MCF 10A (cell line): ENCODE measurements at regions of chr7 and their contacts with region 1.

Region 1: DNA sequence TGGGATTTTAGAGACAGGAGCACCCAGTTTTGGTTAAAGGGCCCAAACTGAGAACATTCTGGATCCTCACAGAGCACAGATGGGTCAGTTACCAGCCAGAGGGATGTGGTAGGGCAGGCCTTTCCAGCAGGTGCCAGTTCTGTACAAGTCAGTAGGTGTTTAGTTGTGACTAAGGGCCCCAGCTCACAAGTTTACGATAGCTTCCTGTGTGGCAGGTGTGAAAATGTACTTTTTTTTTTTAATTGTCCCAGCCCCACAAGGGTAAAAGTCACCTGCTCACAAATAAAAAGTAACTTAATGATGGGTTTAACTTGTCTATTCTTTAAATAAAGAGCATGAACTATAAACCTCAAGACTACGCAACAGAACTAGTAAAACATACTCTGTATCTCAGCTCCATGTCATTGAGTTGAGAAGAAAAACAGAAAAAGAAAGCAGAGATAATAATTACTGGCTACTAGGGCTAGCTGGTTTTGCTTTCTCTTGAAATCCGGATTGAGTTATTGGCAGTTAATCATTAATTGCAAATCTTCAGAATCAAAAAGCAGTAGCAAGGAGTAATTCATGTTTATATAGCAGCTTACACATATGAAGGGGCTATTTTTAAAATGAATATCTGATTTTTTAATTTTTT is 15.4 kb downstream of the NFE2L3 start:
- DNase-seq: no peak
- H3K4me3 Mint-ChIP-seq: no peak overlapping the region
- H3K27ac Mint-ChIP-seq: no peak overlapping the region
- H3K4me1 Mint-ChIP-seq: peaks cover 9% of the 10 kb centered on the region
- H3K27me3 Mint-ChIP-seq: no peaks in the 10 kb centered on the region
- CTCF ChIP-seq: no peak

Region 2: DNA sequence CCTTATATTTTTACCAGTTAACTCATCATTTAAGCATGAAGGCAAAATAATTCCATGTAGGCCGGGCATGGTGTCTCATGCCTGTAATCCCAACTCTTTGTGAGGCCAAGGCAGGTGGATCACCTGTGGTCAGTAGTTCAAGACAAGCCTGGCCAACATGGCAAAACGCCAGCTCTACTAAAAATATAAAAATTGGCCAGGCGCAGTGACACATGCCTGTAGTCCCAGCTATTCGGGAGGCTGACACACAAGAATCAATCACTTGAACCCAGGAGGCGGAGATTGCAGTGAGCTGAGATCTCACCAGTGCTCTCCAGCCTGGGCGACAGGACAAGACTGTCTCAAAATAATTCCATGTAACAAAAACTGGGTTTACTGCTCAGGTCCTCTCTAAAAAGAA is 14.9 kb after region 1 on chr7:
- CTCF ChIA-PET with region 1: interaction called, 4 read pairs
- POLR2A ChIA-PET with region 1: interaction called, 14 read pairs
- intact Hi-C with region 1: no loop called
- DNase-seq: peak; percentile 52
- H3K4me3 Mint-ChIP-seq: no peak overlapping the region
- H3K27ac Mint-ChIP-seq: no peak overlapping the region
- H3K4me1 Mint-ChIP-seq: peaks cover 6% of the 10 kb centered on the region
- H3K27me3 Mint-ChIP-seq: no peaks in the 10 kb centered on the region
- CTCF ChIP-seq: no peak